CD4-positive, alpha-beta T cell (primary cell): ENCODE measurements at regions of chr2 and their contacts with region 1.

Region 1: GRCh38 chr2:196337208-196337953 is 166.0 kb upstream of the STK17B start:
- DNase-seq: peak in 8 of 14 experiments; percentile 7 to 64 (median 27)
- ATAC-seq: peak; percentile 39
- H3K4me3 ChIP-seq: no peak overlapping the region
- H3K4me3 Mint-ChIP-seq: no peak overlapping the region
- H3K27ac ChIP-seq: no peak overlapping the region
- H3K27ac Mint-ChIP-seq: no peak overlapping the region
- H3K4me1 ChIP-seq: no peaks in the 10 kb centered on the region
- H3K4me1 Mint-ChIP-seq: no peaks in the 10 kb centered on the region
- H3K27me3 ChIP-seq: no peaks in the 10 kb centered on the region
- H3K27me3 Mint-ChIP-seq: no peaks in the 10 kb centered on the region
- CTCF ChIP-seq: peak; percentile 71

Region 2: GRCh38 chr2:195498176-195498575 is 839.2 kb before region 1 on chr2:
- CTCF ChIA-PET with region 1: no interaction called
- POLR2A ChIA-PET with region 1: no interaction called
- intact Hi-C with region 1: loop called in 1 of 2 experiments (anchors 10 kb)
- DNase-seq: peak; percentile 39 to 82 (median 60)
- ATAC-seq: peak; percentile 60
- H3K4me3 ChIP-seq: no peak overlapping the region
- H3K4me3 Mint-ChIP-seq: no peak overlapping the region
- H3K27ac ChIP-seq: no peak overlapping the region
- H3K27ac Mint-ChIP-seq: no peak overlapping the region
- H3K4me1 ChIP-seq: peaks cover 6% of the 10 kb centered on the region
- H3K4me1 Mint-ChIP-seq: peaks cover 41% of the 10 kb centered on the region
- H3K27me3 ChIP-seq: no peaks in the 10 kb centered on the region
- H3K27me3 Mint-ChIP-seq: no peaks in the 10 kb centered on the region
- CTCF ChIP-seq: peak; percentile 79

Region 3: GRCh38 chr2:196046123-196046917 is 291.1 kb before region 1 on chr2:
- CTCF ChIA-PET with region 1: no interaction called
- POLR2A ChIA-PET with region 1: no interaction called
- intact Hi-C with region 1: no loop called
- DNase-seq: no peak
- ATAC-seq: no peak
- H3K4me3 ChIP-seq: no peak overlapping the region
- H3K4me3 Mint-ChIP-seq: no peak overlapping the region
- H3K27ac ChIP-seq: no peak overlapping the region
- H3K27ac Mint-ChIP-seq: no peak overlapping the region
- H3K4me1 ChIP-seq: no peaks in the 10 kb centered on the region
- H3K4me1 Mint-ChIP-seq: no peaks in the 10 kb centered on the region
- H3K27me3 ChIP-seq: no peaks in the 10 kb centered on the region
- H3K27me3 Mint-ChIP-seq: peaks cover 19% of the 10 kb centered on the region
- CTCF ChIP-seq: no peak

Region 4: GRCh38 chr2:196131384-196131937 is 205.9 kb before region 1 on chr2:
- CTCF ChIA-PET with region 1: interaction called, 3 read pairs
- POLR2A ChIA-PET with region 1: interaction called, 3 read pairs
- intact Hi-C with region 1: loop called in 1 of 2 experiments (anchors 2 kb)
- DNase-seq: peak in 12 of 14 experiments; percentile 33 to 81 (median 50)
- ATAC-seq: peak; percentile 28
- H3K4me3 ChIP-seq: no peak overlapping the region
- H3K4me3 Mint-ChIP-seq: peak overlapping the region; percentile 3
- H3K27ac ChIP-seq: peak overlapping the region in 1 of 2 donors; percentile 27
- H3K27ac Mint-ChIP-seq: peak overlapping the region; percentile 77
- H3K4me1 ChIP-seq: peaks cover 8% of the 10 kb centered on the region
- H3K4me1 Mint-ChIP-seq: peaks cover 23% of the 10 kb centered on the region
- H3K27me3 ChIP-seq: no peaks in the 10 kb centered on the region
- H3K27me3 Mint-ChIP-seq: no peaks in the 10 kb centered on the region
- CTCF ChIP-seq: peak; percentile 55

Region 5: GRCh38 chr2:196291873-196292800 is 45.2 kb before region 1 on chr2:
- CTCF ChIA-PET with region 1: no interaction called
- POLR2A ChIA-PET with region 1: no interaction called
- intact Hi-C with region 1: loop called in 1 of 2 experiments (anchors 10 kb)
- DNase-seq: peak in 1 of 14 experiments; percentile 21
- ATAC-seq: peak; percentile 29
- H3K4me3 ChIP-seq: no peak overlapping the region
- H3K4me3 Mint-ChIP-seq: peak overlapping the region; percentile 26
- H3K27ac ChIP-seq: no peak overlapping the region
- H3K27ac Mint-ChIP-seq: peak overlapping the region; percentile 45
- H3K4me1 ChIP-seq: peaks cover 24% of the 10 kb centered on the region
- H3K4me1 Mint-ChIP-seq: peaks cover 51% of the 10 kb centered on the region
- H3K27me3 ChIP-seq: no peaks in the 10 kb centered on the region
- H3K27me3 Mint-ChIP-seq: no peaks in the 10 kb centered on the region
- CTCF ChIP-seq: no peak

Region 6: DNA sequence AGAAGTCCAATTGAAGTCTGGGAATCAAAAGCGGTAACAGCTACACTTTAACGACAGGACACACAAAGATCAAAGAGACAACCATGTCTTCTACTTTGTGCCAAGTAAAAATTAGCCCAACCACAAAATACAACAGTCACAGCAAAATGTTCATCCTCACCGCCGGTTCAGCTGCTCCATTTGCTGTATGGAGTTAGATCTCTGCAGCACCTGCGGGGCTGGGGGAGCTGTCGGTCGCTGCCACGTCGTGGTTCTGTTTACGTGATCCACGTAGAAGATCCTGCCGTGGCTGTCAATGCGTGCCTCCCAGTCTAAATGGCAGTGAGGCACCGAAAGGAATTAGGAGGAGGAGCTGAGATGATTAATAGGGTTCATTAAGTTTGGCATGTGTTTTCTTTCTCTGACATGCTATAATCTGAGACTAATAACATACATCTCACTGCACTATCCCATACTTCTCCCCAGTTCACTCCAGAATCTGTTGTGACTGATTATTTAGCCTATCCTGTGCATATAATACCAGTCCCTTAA is 29.5 kb before region 1 on chr2:
- CTCF ChIA-PET with region 1: no interaction called
- POLR2A ChIA-PET with region 1: no interaction called
- intact Hi-C with region 1: no loop called
- DNase-seq: no peak
- ATAC-seq: no peak
- H3K4me3 ChIP-seq: no peak overlapping the region
- H3K4me3 Mint-ChIP-seq: no peak overlapping the region
- H3K27ac ChIP-seq: no peak overlapping the region
- H3K27ac Mint-ChIP-seq: no peak overlapping the region
- H3K4me1 ChIP-seq: no peaks in the 10 kb centered on the region
- H3K4me1 Mint-ChIP-seq: peaks cover 5% of the 10 kb centered on the region
- H3K27me3 ChIP-seq: no peaks in the 10 kb centered on the region
- H3K27me3 Mint-ChIP-seq: peaks cover 4% of the 10 kb centered on the region
- CTCF ChIP-seq: no peak

Region 7: DNA sequence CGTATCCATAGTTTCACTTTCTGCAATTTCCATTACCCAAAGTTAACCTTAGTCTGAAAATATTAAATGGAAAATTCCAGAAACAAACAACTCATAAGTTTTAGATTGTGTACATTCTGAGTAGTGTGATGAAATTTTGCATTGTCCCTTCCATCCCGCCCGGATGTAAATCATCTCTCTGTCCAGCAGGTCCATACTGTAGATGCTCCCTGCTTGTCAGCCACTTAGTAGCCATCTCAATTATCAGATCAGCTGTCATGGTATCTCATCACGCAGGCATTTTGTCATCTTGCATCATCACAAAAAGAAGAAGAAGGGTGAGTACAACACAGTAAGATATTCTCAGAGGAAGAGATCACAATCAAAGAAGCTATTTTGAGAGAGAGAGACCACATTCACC is 19.0 kb after region 1 on chr2:
- CTCF ChIA-PET with region 1: no interaction called
- POLR2A ChIA-PET with region 1: no interaction called
- intact Hi-C with region 1: no loop called
- DNase-seq: no peak
- ATAC-seq: no peak
- H3K4me3 ChIP-seq: no peak overlapping the region
- H3K4me3 Mint-ChIP-seq: no peak overlapping the region
- H3K27ac ChIP-seq: no peak overlapping the region
- H3K27ac Mint-ChIP-seq: no peak overlapping the region
- H3K4me1 ChIP-seq: no peaks in the 10 kb centered on the region
- H3K4me1 Mint-ChIP-seq: no peaks in the 10 kb centered on the region
- H3K27me3 ChIP-seq: no peaks in the 10 kb centered on the region
- H3K27me3 Mint-ChIP-seq: peaks cover 13% of the 10 kb centered on the region
- CTCF ChIP-seq: no peak

Region 8: GRCh38 chr2:197828464-197829135 is 1491.2 kb after region 1 on chr2:
- CTCF ChIA-PET with region 1: no interaction called
- POLR2A ChIA-PET with region 1: no interaction called
- intact Hi-C with region 1: no loop called
- DNase-seq: no peak
- ATAC-seq: no peak
- H3K4me3 ChIP-seq: no peak overlapping the region
- H3K4me3 Mint-ChIP-seq: no peak overlapping the region
- H3K27ac ChIP-seq: no peak overlapping the region
- H3K27ac Mint-ChIP-seq: no peak overlapping the region
- H3K4me1 ChIP-seq: no peaks in the 10 kb centered on the region
- H3K4me1 Mint-ChIP-seq: peaks cover 36% of the 10 kb centered on the region
- H3K27me3 ChIP-seq: no peaks in the 10 kb centered on the region
- H3K27me3 Mint-ChIP-seq: no peaks in the 10 kb centered on the region
- CTCF ChIP-seq: no peak